ENCODE measurements at regions of chr11 and their contacts with region 1.

Region 1: DNA sequence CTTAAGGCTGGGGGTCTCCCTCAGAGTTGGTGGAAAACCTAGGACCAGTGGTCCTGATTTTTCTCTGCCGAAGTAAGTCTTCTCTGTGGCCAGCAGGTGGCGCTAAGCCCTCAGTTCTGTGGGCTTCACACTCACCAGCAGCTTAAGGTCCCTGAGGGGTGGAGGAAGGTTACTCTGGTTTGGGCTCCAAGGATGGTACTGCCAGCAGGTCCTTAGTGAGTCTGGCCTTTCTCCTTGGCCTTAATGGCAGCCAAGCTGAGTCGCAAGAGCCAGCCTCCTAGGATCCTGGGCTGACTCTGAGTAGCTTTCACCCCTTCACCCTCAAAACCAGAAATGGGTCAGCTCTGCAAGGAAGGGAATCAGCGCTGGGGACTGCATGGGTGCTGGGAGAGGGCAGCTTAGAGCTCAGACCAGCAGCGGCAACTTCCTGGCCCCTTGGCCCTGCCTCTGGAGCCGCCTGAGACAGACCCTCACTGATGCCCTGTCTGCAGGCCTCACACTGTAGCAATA is 4.4 kb downstream of the KCNJ11 start:
- DNase-seq: no peak
- H3K4me3 ChIP-seq: no peak overlapping the region
- H3K27ac ChIP-seq: no peak overlapping the region
- H3K4me1 ChIP-seq: peaks cover 6 to 21% (median 17%) of the 10 kb centered on the region in 4 donors
- H3K27me3 ChIP-seq: peaks cover 0 to 8% (median 0%) of the 10 kb centered on the region in 4 donors
- CTCF ChIP-seq: peak; percentile 83 to 93 (median 86)
- EP300 ChIP-seq: no peak
- POLR2A ChIP-seq: no peak

Region 2: GRCh38 chr11:17504330-17505107 is 120.5 kb after region 1 on chr11:
- intact Hi-C with region 1: loop called (anchors 1 kb)
- DNase-seq: no peak
- H3K4me3 ChIP-seq: no peak overlapping the region
- H3K27ac ChIP-seq: no peak overlapping the region
- H3K4me1 ChIP-seq: peaks cover 17 to 20% (median 18%) of the 10 kb centered on the region in 4 donors
- H3K27me3 ChIP-seq: peaks cover 0 to 7% (median 0%) of the 10 kb centered on the region in 4 donors
- CTCF ChIP-seq: peak; percentile 90 to 93 (median 92)
- EP300 ChIP-seq: no peak
- POLR2A ChIP-seq: no peak

Region 3: GRCh38 chr11:17517186-17517585 is 133.1 kb after region 1 on chr11:
- intact Hi-C with region 1: no loop called
- DNase-seq: no peak
- H3K4me3 ChIP-seq: no peak overlapping the region
- H3K27ac ChIP-seq: no peak overlapping the region
- H3K4me1 ChIP-seq: no peaks in the 10 kb centered on the region
- H3K27me3 ChIP-seq: peaks cover 0 to 4% (median 0%) of the 10 kb centered on the region in 4 donors
- CTCF ChIP-seq: no peak
- EP300 ChIP-seq: no peak
- POLR2A ChIP-seq: no peak

Region 4: DNA sequence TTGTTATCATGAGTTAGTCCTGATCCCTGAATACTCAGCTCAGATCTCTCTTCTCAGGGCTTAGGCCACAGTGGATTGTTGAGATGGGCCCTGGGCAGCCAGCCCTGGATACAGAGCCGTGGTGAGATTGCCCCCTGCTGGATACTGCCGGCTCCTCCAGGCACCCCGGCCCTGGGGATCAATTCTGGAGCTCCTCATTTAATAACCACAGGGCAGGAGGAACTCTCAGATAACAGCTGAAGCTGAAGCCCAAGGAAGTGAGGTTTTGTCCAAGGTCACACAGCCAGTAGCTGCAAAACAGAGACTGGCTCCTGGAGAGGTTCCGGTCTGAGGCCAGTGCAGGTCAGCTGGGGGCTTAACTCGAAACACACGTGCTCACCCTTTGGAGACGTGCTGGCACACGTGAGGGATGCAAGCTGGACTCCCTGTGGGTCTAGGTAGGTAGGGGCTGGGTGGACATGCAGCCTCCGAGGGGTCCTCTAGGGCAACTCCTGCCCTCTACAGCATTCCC is 144.2 kb after region 1 on chr11:
- intact Hi-C with region 1: loop called (anchors 2 kb)
- DNase-seq: no peak
- H3K4me3 ChIP-seq: no peak overlapping the region
- H3K27ac ChIP-seq: no peak overlapping the region
- H3K4me1 ChIP-seq: no peaks in the 10 kb centered on the region
- H3K27me3 ChIP-seq: peaks cover 0 to 10% (median 0%) of the 10 kb centered on the region in 4 donors
- CTCF ChIP-seq: peak; percentile 52 to 68 (median 60)
- EP300 ChIP-seq: no peak
- POLR2A ChIP-seq: no peak